ENCODE measurements at regions of chr20 and their contacts with region 1.

Region 1: GRCh38 chr20:5448449-5449118 is 131.8 kb upstream of the PROKR2 start:
- DNase-seq: peak; percentile 50
- H3K4me3 ChIP-seq: no peak overlapping the region
- H3K27ac ChIP-seq: no peak overlapping the region
- H3K4me1 ChIP-seq: no peaks in the 10 kb centered on the region
- H3K27me3 ChIP-seq: peaks cover 17% of the 10 kb centered on the region
- CTCF ChIP-seq: peak; percentile 40 to 67 (median 61)
- EP300 ChIP-seq: no peak
- POLR2A ChIP-seq: no peak

Region 2: DNA sequence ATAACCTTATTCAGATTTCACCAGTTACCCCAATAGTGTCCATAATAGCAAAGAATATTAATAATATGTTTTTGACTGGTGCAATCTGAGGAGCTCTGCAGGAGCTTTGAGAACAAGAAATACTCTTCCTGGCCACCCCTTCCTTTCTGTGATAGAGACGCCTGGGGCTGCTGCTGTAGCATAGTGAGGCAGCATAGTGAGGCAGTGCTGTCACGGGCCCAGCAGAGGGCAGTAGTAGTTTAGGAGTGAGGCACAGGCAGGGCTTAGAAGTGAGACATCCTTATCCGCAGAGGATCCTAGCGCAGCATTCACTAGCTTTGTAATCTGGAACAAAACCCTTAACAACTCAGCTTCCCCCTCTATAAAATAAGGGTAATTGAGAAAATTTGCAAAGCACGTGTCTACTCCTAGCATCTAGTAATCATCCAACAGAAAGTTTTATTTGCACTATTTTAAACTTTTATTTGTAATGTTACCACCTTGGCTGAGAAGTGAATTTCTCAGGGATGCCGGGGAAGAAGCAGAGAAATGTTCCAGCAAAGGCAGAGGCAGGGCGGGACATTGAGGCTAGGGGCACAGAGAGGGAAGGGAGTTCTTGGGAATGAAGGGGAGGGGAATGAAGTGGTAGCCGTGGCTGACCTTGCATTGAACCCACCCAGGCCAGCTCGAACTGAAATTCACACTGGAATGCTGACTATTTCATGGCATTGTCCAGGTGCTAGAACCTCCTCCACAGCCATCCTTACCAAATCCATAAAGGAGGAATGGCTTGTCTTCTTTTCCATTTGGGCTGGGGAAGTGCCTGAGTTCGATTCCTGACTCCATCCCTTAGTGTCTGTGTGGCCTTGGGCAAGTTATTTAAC is 243.0 kb before region 1 on chr20:
- in situ Hi-C with region 1: loop called in 1 of 4 experiments (anchors 25 kb)
- intact Hi-C with region 1: no loop called
- DNase-seq: peak; percentile 69
- H3K4me3 ChIP-seq: no peak overlapping the region
- H3K27ac ChIP-seq: no peak overlapping the region
- H3K4me1 ChIP-seq: peaks cover 0 to 8% (median 6%) of the 10 kb centered on the region in 4 donors
- H3K27me3 ChIP-seq: no peaks in the 10 kb centered on the region
- CTCF ChIP-seq: peak; percentile 72 to 83 (median 77)
- EP300 ChIP-seq: no peak
- POLR2A ChIP-seq: no peak

Region 3: GRCh38 chr20:5535125-5535771 is 86.7 kb after region 1 on chr20:
- in situ Hi-C with region 1: no loop called
- intact Hi-C with region 1: no loop called
- DNase-seq: no peak
- H3K4me3 ChIP-seq: no peak overlapping the region
- H3K27ac ChIP-seq: no peak overlapping the region
- H3K4me1 ChIP-seq: peaks cover 0 to 12% (median 7%) of the 10 kb centered on the region in 4 donors
- H3K27me3 ChIP-seq: no peaks in the 10 kb centered on the region
- CTCF ChIP-seq: no peak
- EP300 ChIP-seq: no peak
- POLR2A ChIP-seq: no peak

Measured in transverse colon (tissue), 4 donors.